ENCODE measurements at regions of chr7 and their contacts with region 1.

Region 1: GRCh38 chr7:28921822-28922221 is 36.3 kb downstream of the TRIL start:
- DNase-seq: peak; percentile 29 to 65
- H3K4me3 ChIP-seq: no peak overlapping the region
- H3K27ac ChIP-seq: no peak overlapping the region
- H3K4me1 ChIP-seq: peaks cover 10% of the 10 kb centered on the region; the same call in 1 of the 2 replicates
- H3K27me3 ChIP-seq: no peaks in the 10 kb centered on the region
- CTCF ChIP-seq: peak; percentile 97

Region 2: DNA sequence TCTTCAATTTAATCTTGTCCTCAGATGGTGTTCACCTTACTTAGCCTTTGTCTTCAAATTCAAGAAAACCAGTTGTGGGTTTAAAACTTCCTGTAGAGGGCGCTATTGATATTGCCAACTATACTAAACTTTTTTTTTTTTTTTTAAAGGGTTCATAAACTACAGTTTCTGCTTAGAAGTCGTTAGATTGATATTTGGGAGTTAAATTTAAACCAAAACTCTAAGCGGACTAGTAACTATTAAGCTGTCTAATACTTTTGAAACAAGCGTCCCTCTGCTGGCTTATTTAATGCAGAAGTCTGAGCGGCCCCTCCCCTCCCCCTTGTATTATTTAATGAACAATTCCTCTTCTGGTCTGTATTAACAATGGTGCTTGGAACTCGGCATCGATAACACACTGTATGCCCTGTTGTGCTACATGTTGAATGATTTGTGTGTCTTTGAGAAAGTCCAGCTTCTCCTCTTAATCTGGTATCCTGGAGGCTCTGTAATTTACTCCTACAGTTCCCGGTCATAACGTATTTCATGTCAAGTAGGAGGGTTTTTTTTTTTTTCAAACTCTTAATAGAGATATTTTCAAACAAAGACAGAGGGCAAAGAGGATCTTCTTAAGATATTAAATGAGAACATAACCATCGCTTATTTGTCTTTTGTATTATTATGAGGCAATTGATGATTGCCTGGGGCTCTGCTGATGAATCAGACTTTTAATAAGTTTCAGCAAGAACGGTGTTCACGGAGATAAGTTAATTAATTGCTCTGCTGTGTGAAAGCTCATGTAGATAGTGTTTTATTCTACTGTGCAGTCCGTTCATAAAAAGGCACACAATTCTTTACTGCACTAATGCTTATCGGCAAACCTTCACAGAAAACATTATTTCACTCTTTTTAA is 532.1 kb before region 1 on chr7:
- CTCF ChIA-PET with region 1: no interaction called
- POLR2A ChIA-PET with region 1: no interaction called
- intact Hi-C with region 1: loop called (anchors 5 kb)
- DNase-seq: peak in 1 of 2 experiments; percentile 75
- H3K4me3 ChIP-seq: peak overlapping the region; percentile 53
- H3K27ac ChIP-seq: no peak overlapping the region
- H3K4me1 ChIP-seq: peaks cover 11% of the 10 kb centered on the region
- H3K27me3 ChIP-seq: no peaks in the 10 kb centered on the region
- CTCF ChIP-seq: peak; percentile 97

Region 3: GRCh38 chr7:28481091-28481926 is 440.5 kb before region 1 on chr7:
- CTCF ChIA-PET with region 1: no interaction called
- POLR2A ChIA-PET with region 1: no interaction called
- intact Hi-C with region 1: no loop called
- DNase-seq: no peak
- H3K4me3 ChIP-seq: no peak overlapping the region
- H3K27ac ChIP-seq: no peak overlapping the region
- H3K4me1 ChIP-seq: no peaks in the 10 kb centered on the region
- H3K27me3 ChIP-seq: no peaks in the 10 kb centered on the region
- CTCF ChIP-seq: no peak

Region 4: DNA sequence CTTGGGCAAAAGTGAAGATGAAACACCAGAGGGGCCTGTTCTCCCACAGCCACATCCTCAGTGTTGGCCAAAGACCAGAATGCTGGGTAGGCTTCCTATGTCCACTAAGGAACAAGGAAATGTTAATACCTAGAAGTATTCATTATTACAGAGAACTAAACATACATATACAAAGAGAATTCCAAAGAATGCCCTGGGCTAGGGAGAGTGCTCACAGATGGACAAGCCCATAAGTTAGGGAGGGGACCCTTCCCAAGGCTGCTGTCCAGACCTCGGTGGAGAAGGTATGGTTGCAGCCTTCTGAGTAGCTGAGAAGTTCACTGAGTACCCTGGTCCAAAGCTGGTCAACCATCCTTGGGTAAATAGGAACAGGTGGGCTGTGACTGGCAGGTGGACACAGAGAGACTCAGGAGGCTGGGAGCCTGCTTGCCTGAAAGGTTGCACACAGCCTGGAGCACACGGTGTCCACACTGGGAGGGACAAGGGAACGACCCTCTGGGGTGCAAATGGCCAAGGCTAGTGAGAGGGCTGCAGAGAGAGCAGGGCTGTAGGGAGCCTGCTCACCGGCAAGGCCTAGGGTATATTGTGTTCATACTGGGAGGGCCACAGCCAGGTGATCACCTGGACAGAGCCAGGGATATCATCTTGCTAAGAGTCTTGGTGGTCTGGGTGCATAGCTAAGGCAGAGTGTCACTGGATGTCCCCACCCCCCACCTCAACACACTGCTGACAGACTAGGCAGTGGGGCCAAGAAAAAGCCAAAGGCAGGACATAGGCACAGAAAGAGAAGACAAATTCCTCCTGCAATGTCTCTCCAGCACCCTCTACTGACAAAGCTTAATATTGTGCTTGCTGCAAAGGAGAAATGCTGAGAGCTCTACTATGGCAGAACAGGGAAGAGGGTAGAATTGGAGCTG is 184.2 kb after region 1 on chr7:
- CTCF ChIA-PET with region 1: interaction called, 8 read pairs
- POLR2A ChIA-PET with region 1: no interaction called
- intact Hi-C with region 1: loop called (anchors 1 kb)
- DNase-seq: peak; percentile 10 to 58
- H3K4me3 ChIP-seq: no peak overlapping the region
- H3K27ac ChIP-seq: peak overlapping the region; percentile 3; the same call in 1 of the 2 replicates
- H3K4me1 ChIP-seq: peaks cover 42% of the 10 kb centered on the region
- H3K27me3 ChIP-seq: no peaks in the 10 kb centered on the region
- CTCF ChIP-seq: peak; percentile 88

Region 5: DNA sequence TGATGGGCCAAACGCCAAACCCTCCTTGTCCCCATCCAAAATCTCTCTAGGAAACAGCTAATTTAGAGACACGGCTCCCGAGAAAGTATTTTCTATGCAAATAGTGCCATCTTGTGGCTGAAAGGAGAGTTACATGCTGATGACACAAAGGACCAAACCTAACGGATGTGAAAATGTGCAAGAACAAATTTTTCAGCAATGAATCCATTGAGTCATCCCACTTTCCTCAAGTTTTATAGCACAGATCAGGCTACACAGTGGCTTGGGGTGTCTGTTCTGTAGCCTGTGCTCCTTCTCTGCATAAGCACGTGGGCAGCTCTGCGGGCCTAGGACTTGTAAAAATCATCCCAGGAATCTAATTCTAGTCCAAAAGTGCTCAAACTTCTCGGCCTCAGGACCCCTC is 487.0 kb after region 1 on chr7:
- CTCF ChIA-PET with region 1: interaction called, 14 read pairs
- POLR2A ChIA-PET with region 1: no interaction called
- intact Hi-C with region 1: loop called (anchors 1 kb)
- DNase-seq: peak; percentile 55 to 77
- H3K4me3 ChIP-seq: no peak overlapping the region
- H3K27ac ChIP-seq: no peak overlapping the region
- H3K4me1 ChIP-seq: peaks cover 19% of the 10 kb centered on the region
- H3K27me3 ChIP-seq: peaks cover 4% of the 10 kb centered on the region; the same call in 1 of the 2 replicates
- CTCF ChIP-seq: peak; percentile 99

Region 6: DNA sequence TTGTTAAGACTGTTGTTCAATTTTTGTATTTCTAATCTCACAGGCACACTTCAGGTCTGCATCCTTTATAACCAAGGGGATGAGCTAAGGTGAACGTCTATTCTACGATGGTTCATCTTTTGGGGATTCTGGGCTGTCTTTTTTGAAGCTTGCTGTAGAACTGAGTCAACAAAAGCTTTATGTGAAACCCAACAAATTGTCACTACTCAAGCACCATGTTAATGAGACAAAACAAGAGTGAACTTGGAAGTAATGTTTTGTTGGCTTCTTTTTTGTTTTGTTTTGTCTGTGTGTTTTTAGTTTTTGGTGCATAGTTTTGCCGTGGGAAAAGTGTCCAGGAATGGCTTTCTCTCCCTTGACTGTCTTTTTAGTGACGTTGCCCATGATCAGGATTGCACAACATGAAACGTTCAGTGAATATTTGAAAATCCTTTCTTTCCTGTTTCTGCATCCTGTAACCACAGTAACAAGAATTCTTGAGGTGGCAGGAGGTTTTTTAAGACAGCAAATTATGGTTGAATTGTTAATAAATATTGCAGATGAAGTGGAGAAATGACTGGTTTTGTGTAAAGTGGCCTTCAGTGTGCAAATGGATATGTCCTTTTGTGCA is 950.1 kb after region 1 on chr7:
- CTCF ChIA-PET with region 1: no interaction called
- POLR2A ChIA-PET with region 1: no interaction called
- intact Hi-C with region 1: loop called (anchors 1 kb)
- DNase-seq: peak in 1 of 2 experiments; percentile 57
- H3K4me3 ChIP-seq: 0 out of 2 replicates have a peak overlapping the region, but pooled peaks have one; percentile 6
- H3K27ac ChIP-seq: no peak overlapping the region
- H3K4me1 ChIP-seq: peaks cover 6% of the 10 kb centered on the region
- H3K27me3 ChIP-seq: no peaks in the 10 kb centered on the region
- CTCF ChIP-seq: no peak

Region 7: GRCh38 chr7:30412810-30413504 is 1491.1 kb after region 1 on chr7:
- CTCF ChIA-PET with region 1: no interaction called
- POLR2A ChIA-PET with region 1: no interaction called
- intact Hi-C with region 1: loop called (anchors 5 kb)
- DNase-seq: peak; percentile 40 to 80
- H3K4me3 ChIP-seq: no peak overlapping the region
- H3K27ac ChIP-seq: no peak overlapping the region
- H3K4me1 ChIP-seq: no peaks in the 10 kb centered on the region
- H3K27me3 ChIP-seq: no peaks in the 10 kb centered on the region
- CTCF ChIP-seq: peak; percentile 84